ENCODE measurements at regions of chr17 and their contacts with region 1.

Region 1: DNA sequence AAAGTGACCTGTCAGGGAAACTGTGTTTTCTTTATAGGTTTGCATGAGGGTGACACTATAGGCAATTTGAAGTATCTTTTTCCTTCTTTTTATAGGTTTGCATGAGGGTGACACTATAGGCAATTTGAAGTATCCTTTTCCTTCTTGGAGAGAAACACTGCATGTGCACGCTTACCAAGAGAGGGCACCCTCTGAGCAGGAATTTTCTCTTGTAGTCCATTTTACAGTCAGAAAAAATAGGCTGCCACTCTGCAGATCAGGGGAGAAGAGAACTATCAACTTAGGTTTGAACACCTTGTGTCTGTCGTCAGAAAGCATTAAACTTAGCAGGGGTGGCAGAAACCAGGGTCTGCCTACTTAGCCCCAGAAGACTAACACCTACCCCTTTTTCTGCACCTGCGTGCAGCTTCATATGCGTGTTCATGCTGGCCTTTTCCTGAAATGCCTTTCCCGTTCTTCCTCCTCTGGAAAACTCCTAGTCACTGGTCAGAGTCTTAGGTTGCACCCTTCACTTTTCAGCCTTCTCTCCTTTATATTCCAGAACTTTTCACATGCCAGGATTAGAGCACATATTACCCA is 16.4 kb upstream of the SMIM36 start:
- DNase-seq: peak in 2 of 4 experiments; percentile 29 to 57
- ATAC-seq: peak; percentile 86
- H3K4me3 ChIP-seq: no peak overlapping the region
- H3K27ac ChIP-seq: no peak overlapping the region
- H3K4me1 ChIP-seq: no peaks in the 10 kb centered on the region
- H3K27me3 ChIP-seq: no peaks in the 10 kb centered on the region
- CTCF ChIP-seq: peak; percentile 62 to 86 (median 66)
- EP300 ChIP-seq: no peak
- POLR2A ChIP-seq: no peak
- RAD21 ChIP-seq: peak; percentile 95

Region 2: DNA sequence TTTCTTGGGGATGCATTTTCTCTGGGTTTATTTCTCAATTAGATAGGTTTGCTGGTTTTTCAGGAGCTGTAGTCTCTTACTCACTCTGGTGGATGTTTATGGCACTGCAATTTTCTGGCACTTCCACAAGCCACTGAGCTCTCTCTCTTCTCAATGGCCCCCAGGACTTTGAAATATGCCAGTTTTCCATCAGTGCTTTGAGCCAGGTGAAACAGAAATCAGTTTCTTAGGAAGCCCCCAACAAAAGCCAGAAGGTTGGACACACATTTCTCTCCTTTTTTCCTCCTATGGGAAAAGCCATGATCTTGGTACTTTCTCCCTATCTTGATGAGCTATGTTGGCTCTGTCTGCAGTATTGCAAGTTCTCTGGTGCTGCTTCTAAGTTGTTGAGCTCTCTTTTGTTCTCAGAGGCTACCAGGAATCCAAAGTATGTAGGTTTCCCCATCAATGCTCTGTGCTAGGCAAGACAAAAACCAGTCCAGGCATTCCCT is 74.3 kb after region 1 on chr17:
- CTCF ChIA-PET with region 1: interaction called, 28 read pairs
- POLR2A ChIA-PET with region 1: interaction called, 3 read pairs
- in situ Hi-C with region 1: loop called (anchors 5 kb)
- intact Hi-C with region 1: loop called (anchors 1 kb)
- DNase-seq: peak; percentile 16 to 43 (median 21)
- ATAC-seq: peak; percentile 75
- H3K4me3 ChIP-seq: no peak overlapping the region
- H3K27ac ChIP-seq: no peak overlapping the region
- H3K4me1 ChIP-seq: no peaks in the 10 kb centered on the region; a peak in 1 of 5 replicates
- H3K27me3 ChIP-seq: no peaks in the 10 kb centered on the region; a peak in 1 of 5 replicates
- CTCF ChIP-seq: peak; percentile 61 to 78 (median 66)
- EP300 ChIP-seq: no peak
- POLR2A ChIP-seq: no peak
- RAD21 ChIP-seq: peak; percentile 65 to 93

Region 3: DNA sequence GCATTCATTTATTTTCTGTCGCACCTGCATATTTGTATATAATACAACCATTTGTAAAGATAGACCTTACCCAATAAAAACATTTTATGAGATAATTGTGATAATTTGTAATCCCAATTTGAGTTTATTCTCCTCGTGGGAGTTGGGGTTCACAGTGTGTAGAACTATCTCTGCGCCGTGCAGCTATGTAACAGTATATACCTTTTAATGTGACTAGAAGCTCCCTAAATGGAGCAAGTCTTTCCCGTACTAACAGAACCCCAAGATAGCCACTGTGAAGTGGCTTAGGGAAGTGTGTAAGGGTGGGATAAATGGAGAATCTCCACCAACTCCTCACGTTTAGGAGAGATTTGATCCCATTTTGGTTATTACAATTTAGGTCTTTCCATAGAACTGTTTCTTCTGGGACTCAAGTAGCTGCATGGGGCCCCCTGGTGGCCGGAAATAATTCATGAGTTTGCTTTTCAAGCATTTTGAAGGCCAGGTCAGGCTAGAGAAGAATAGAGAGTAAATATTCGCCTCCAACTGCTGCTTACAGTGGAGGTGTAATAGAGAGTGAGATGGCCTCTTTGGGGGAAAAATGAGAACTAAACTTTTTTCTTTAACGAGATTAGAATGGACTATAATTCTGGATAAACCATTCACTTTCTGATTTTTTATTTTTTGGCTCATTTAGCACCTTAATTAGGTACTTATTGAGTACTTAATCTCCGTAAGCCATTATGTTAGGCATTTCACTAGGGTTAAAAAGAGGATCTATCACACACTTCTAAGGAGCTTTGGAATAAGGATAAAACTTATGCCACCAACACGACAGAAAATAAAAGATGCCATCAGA is 190.5 kb after region 1 on chr17:
- CTCF ChIA-PET with region 1: interaction called, 20 read pairs
- POLR2A ChIA-PET with region 1: no interaction called
- in situ Hi-C with region 1: loop called (anchors 5 kb)
- intact Hi-C with region 1: loop called (anchors 1 kb)
- DNase-seq: peak; percentile 42 to 83 (median 48)
- ATAC-seq: peak; percentile 83
- H3K4me3 ChIP-seq: no peak overlapping the region
- H3K27ac ChIP-seq: no peak overlapping the region
- H3K4me1 ChIP-seq: peaks cover 0 to 6% of the 10 kb centered on the region in 2 experiments; a peak in 3 of 5 replicates
- H3K27me3 ChIP-seq: no peaks in the 10 kb centered on the region
- CTCF ChIP-seq: peak; percentile 76 to 83 (median 78)
- EP300 ChIP-seq: no peak
- POLR2A ChIP-seq: no peak
- RAD21 ChIP-seq: peak; percentile 81 to 87

Region 4: GRCh38 chr17:55770148-55770870 is 242.7 kb after region 1 on chr17:
- CTCF ChIA-PET with region 1: interaction called, 60 read pairs
- POLR2A ChIA-PET with region 1: no interaction called
- in situ Hi-C with region 1: loop called (anchors 5 kb)
- intact Hi-C with region 1: loop called (anchors 1 kb)
- DNase-seq: peak; percentile 39 to 64 (median 52)
- ATAC-seq: peak; percentile 65
- H3K4me3 ChIP-seq: no peak overlapping the region
- H3K27ac ChIP-seq: no peak overlapping the region
- H3K4me1 ChIP-seq: no peaks in the 10 kb centered on the region
- H3K27me3 ChIP-seq: no peaks in the 10 kb centered on the region
- CTCF ChIP-seq: peak; percentile 36 to 81 (median 56); a peak in 4 of 6 replicates
- EP300 ChIP-seq: no peak
- POLR2A ChIP-seq: no peak
- RAD21 ChIP-seq: peak; percentile 86 to 90

Region 5: GRCh38 chr17:55962951-55963401 is 435.3 kb after region 1 on chr17:
- CTCF ChIA-PET with region 1: interaction called, 3 read pairs
- POLR2A ChIA-PET with region 1: no interaction called
- in situ Hi-C with region 1: no loop called
- intact Hi-C with region 1: loop called (anchors 10 kb)
- DNase-seq: no peak
- ATAC-seq: no peak
- H3K4me3 ChIP-seq: no peak overlapping the region
- H3K27ac ChIP-seq: no peak overlapping the region
- H3K4me1 ChIP-seq: no peaks in the 10 kb centered on the region
- H3K27me3 ChIP-seq: no peaks in the 10 kb centered on the region
- CTCF ChIP-seq: no peak
- EP300 ChIP-seq: no peak
- POLR2A ChIP-seq: no peak
- RAD21 ChIP-seq: no peak

Region 6: DNA sequence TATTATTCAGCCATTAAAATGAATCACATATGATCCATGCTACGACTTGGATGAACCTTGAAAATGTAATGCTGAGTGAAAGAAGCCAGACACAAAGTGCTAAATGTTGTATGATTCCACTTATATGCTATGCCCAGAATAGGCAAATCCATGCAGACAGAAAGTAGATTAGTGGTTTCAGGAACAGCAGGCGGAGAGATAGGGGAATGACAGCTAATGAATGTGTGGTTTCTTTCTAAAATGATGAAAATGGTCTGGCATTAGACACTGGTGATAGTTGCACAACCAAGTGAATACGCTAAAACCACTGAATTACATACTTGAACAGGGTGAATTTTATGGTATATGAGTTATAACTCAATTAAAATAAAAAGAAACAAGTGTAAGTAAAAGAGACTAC is 944.1 kb after region 1 on chr17:
- CTCF ChIA-PET with region 1: no interaction called
- POLR2A ChIA-PET with region 1: no interaction called
- in situ Hi-C with region 1: loop called (anchors 5 kb)
- intact Hi-C with region 1: loop called (anchors 5 kb)
- DNase-seq: no peak
- ATAC-seq: no peak
- H3K4me3 ChIP-seq: no peak overlapping the region
- H3K27ac ChIP-seq: no peak overlapping the region
- H3K4me1 ChIP-seq: no peaks in the 10 kb centered on the region
- H3K27me3 ChIP-seq: no peaks in the 10 kb centered on the region
- CTCF ChIP-seq: no peak
- EP300 ChIP-seq: no peak
- POLR2A ChIP-seq: no peak
- RAD21 ChIP-seq: no peak